Activated CD4-positive, alpha-beta T cell treated with anti-CD3 and anti-CD28 coated beads, Interleukin-2, amount 10 ng/mL, durations not matched to agents 24 days and 14 days (primary cell): ENCODE measurements at regions of chr10 and their contacts with region 1.

Region 1: GRCh38 chr10:102503281-102504220 is at the start of gene SUFU:
- DNase-seq: peak; percentile 99
- H3K4me3 Mint-ChIP-seq: no peak within 1 kb of the TSS
- H3K27ac Mint-ChIP-seq: peak within 1 kb of the TSS; percentile 82
- H3K4me1 Mint-ChIP-seq: peaks cover 28% of the 10 kb centered on the region
- H3K27me3 Mint-ChIP-seq: no peaks in the 10 kb centered on the region
- total RNA-seq, gene SUFU: 8.4 and 9.9 TPM in 2 replicates

Region 2: GRCh38 chr10:101060036-101060950 is 1443.3 kb before region 1 on chr10:
- intact Hi-C with region 1: loop called (anchors 5 kb)
- DNase-seq: peak; percentile 97
- H3K4me3 Mint-ChIP-seq: peak overlapping the region; percentile 84
- H3K27ac Mint-ChIP-seq: peak overlapping the region; percentile 96
- H3K4me1 Mint-ChIP-seq: peaks cover 33% of the 10 kb centered on the region
- H3K27me3 Mint-ChIP-seq: peaks cover 26% of the 10 kb centered on the region

Region 3: GRCh38 chr10:102120142-102120990 is 383.2 kb before region 1 on chr10 and contains the start of gene LDB1:
- intact Hi-C with region 1: loop called (anchors 1 kb)
- DNase-seq: peak; percentile 91
- H3K4me3 Mint-ChIP-seq: peak within 1 kb of the TSS; percentile 94
- H3K27ac Mint-ChIP-seq: peak within 1 kb of the TSS; percentile 98
- H3K4me1 Mint-ChIP-seq: peaks cover 49% of the 10 kb centered on the region
- H3K27me3 Mint-ChIP-seq: no peaks in the 10 kb centered on the region
- total RNA-seq, gene LDB1: 76.4 and 78.2 TPM in 2 replicates

Region 4: GRCh38 chr10:102394079-102394800 is 109.3 kb before region 1 on chr10:
- intact Hi-C with region 1: loop called (anchors 1 kb)
- DNase-seq: peak; percentile 100
- H3K4me3 Mint-ChIP-seq: peak overlapping the region; percentile 90
- H3K27ac Mint-ChIP-seq: peak overlapping the region; percentile 100
- H3K4me1 Mint-ChIP-seq: peaks cover 41% of the 10 kb centered on the region
- H3K27me3 Mint-ChIP-seq: peaks cover 3% of the 10 kb centered on the region

Region 5: GRCh38 chr10:102461187-102462054 is 42.1 kb before region 1 on chr10:
- intact Hi-C with region 1: loop called (anchors 1 kb)
- DNase-seq: peak; percentile 98
- H3K4me3 Mint-ChIP-seq: peak overlapping the region; percentile 88
- H3K27ac Mint-ChIP-seq: peak overlapping the region; percentile 88
- H3K4me1 Mint-ChIP-seq: peaks cover 28% of the 10 kb centered on the region
- H3K27me3 Mint-ChIP-seq: peaks cover 6% of the 10 kb centered on the region

Region 6: DNA sequence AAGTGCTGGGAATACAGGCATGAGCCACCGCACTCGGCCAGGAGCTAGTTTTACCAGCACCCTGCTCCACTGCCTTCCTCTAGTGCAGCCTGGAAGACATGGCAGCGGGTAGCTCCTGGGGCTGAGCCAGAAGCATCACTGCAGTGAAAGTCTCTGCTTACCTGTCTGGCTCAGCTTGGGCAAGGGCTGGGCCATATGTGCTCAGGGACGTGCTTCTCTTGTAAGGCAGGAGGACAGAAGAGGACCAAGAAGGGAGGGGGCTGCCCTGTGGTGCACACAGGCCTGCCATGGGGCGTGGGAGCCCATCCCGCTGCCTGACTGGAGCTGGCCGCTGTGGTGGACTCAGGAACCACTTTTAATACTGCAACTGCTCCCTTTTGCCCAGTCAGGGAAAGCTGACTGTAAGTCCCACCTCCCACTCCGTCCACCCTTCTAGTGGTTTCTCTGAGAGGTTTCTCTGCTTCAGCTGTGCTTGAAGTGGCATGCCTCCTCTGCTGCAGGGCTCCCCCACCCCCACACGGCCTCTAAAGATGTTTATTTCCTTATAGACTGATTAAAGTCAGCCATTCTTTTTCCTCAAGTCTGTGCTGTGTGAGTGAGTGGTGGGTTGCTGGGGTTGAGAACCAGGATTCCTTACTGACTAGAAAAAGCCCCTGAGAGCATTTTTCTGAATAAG is 26.9 kb before region 1 on chr10:
- intact Hi-C with region 1: no loop called
- DNase-seq: no peak
- H3K4me3 Mint-ChIP-seq: no peak overlapping the region
- H3K27ac Mint-ChIP-seq: peak overlapping the region; percentile 70
- H3K4me1 Mint-ChIP-seq: peaks cover 22% of the 10 kb centered on the region
- H3K27me3 Mint-ChIP-seq: no peaks in the 10 kb centered on the region

Region 7: DNA sequence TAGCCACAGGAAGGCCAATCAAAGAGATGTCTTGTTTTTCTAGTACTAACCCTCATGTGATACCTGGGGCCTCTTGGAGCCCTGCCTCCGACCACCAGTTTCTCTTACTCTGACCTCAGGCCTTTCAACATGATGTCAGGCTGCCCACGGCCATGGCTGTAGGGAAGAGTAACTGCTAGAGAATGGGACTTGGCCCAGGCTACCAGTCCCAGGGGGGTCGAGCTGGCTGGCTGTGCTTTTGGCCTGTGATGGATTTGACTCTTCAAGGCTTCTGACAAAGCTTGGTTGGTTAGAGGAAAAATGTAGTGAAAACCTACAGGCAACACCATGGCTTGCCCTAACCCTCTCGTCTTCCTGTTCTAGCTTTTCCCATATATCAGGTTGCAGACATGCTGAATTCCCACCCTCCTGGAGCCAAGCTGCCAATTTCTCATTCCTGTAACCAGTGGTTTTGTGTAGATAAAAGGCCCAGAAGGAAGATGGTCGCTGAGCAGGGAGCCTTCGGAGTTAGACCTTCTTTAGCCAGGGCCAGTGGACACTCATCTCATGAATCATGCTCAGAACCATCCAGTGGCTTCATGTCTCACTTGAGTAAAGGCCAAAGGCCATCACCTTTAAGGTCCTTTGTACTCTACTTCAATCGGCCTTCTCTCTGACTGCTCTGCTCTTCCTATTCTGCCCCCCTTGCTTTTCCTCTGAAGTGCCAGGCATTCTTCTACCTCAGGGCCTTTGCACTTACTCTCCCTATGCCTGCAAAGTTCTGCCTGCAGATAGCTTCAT is 19.9 kb after region 1 on chr10:
- intact Hi-C with region 1: no loop called
- DNase-seq: no peak
- H3K4me3 Mint-ChIP-seq: no peak overlapping the region
- H3K27ac Mint-ChIP-seq: no peak overlapping the region
- H3K4me1 Mint-ChIP-seq: peaks cover 9% of the 10 kb centered on the region
- H3K27me3 Mint-ChIP-seq: no peaks in the 10 kb centered on the region

Region 8: DNA sequence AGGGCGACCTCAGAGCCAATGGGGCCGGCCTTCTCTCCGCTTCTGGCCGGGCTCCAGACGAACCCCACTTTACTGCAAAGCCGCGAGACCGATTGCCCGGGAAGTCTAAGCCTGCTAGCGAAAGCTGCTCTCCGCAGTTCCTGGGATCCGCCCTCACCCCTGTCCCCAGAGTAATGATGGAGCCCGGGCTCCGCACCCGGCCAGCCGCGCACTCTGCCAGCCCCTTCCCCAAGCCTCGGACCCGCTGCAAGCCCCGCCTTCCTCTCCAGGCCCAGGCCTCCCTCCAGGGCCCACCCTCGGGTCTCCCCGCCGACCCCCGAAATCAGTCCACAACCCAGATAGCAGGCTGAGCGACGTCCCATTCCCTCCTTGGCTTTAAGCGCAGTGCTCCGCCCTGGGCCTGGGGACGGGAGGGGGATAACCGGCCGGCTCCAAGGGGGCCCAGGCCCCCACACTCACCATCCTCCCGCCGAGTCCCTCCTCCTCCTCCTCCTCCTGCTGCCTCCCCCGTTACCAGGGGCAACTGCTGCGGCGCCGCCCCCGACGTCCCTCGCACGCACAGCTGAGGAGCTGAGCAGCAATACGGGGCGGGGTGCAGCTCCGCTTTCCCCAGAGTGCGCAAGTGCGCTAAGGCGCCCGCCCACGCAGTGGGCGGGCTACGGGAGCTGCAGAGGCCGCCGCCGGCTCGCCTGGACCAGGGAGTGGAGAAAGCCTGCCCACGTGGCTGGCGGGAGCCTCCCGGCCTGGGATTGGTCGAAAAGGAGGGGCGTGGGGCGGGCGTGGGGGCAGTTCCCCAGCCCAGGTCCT is 210.5 kb after region 1 on chr10 and contains the start of gene ARL3:
- intact Hi-C with region 1: loop called (anchors 2 kb)
- DNase-seq: peak; percentile 98
- H3K4me3 Mint-ChIP-seq: peak within 1 kb of the TSS; percentile 80
- H3K27ac Mint-ChIP-seq: peak within 1 kb of the TSS; percentile 93
- H3K4me1 Mint-ChIP-seq: peaks cover 41% of the 10 kb centered on the region
- H3K27me3 Mint-ChIP-seq: no peaks in the 10 kb centered on the region
- total RNA-seq, gene ARL3: 6.3 and 6.4 TPM in 2 replicates

Region 9: DNA sequence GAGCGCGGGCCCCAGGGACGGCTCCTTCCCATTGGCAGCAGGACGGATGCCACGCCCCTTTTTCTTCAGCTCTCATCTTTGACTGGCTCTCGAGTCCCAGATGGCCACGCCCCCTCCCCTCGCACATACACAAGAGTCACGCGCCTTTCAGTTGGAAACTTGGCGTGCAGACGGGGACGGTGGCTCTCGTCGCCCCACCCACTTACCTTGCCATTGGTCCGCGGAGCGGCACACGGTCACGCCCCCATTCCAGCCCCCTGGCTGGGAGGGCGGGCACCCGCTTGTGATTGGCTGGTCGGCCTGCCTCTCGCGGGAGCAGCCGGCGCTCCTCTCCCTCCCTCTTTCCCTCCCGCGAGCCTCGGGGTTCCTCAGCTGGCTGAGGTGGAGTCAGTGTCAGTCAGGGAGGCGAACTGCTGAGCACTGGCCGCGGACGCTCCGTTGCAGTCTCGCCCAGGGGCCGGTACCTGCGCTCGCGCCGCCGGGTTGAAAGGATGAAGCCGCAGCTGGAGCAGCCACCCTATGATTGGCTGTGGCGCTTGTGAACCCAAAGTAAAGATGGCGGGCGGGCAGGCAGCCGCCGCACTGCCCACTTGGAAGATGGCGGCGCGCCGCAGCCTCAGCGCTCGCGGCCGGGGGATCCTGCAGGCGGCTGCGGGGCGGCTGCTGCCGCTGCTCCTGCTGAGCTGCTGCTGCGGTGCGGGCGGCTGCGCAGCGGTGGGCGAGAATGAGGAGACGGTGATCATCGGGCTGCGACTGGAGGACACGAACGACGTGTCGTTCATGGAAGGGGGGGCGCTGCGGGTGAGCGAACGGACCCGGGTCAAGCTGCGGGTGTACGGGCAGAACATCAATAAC is 414.6 kb after region 1 on chr10 and contains the start of gene CNNM2:
- intact Hi-C with region 1: loop called (anchors 5 kb)
- DNase-seq: peak; percentile 100
- H3K4me3 Mint-ChIP-seq: peak within 1 kb of the TSS; percentile 96
- H3K27ac Mint-ChIP-seq: peak within 1 kb of the TSS; percentile 94
- H3K4me1 Mint-ChIP-seq: peaks cover 43% of the 10 kb centered on the region
- H3K27me3 Mint-ChIP-seq: peaks cover 2% of the 10 kb centered on the region
- total RNA-seq, gene CNNM2: 5.6 and 6.7 TPM in 2 replicates

Region 10: GRCh38 chr10:103224133-103224532 is 720.6 kb after region 1 on chr10:
- intact Hi-C with region 1: no loop called
- DNase-seq: no peak
- H3K4me3 Mint-ChIP-seq: no peak overlapping the region
- H3K27ac Mint-ChIP-seq: no peak overlapping the region
- H3K4me1 Mint-ChIP-seq: no peaks in the 10 kb centered on the region
- H3K27me3 Mint-ChIP-seq: peaks cover 2% of the 10 kb centered on the region

Region 11: GRCh38 chr10:103534581-103535508 is 1031.3 kb after region 1 on chr10:
- intact Hi-C with region 1: no loop called
- DNase-seq: no peak
- H3K4me3 Mint-ChIP-seq: no peak overlapping the region
- H3K27ac Mint-ChIP-seq: no peak overlapping the region
- H3K4me1 Mint-ChIP-seq: no peaks in the 10 kb centered on the region
- H3K27me3 Mint-ChIP-seq: peaks cover 25% of the 10 kb centered on the region